HCT116 (cell line): ENCODE measurements at regions of chr10 and their contacts with region 1.

Region 1: GRCh38 chr10:112383325-112383724 is 9.4 kb downstream of the ACSL5 start:
- DNase-seq: peak; percentile 93
- ATAC-seq: peak; percentile 35
- H3K4me3 ChIP-seq: peak overlapping the region; percentile 2 to 35; a peak in 2 of 4 replicates
- H3K27ac ChIP-seq: peak overlapping the region; percentile 77
- H3K4me1 ChIP-seq: peaks cover 90 to 98% of the 10 kb centered on the region in 2 experiments
- H3K27me3 ChIP-seq: no peaks in the 10 kb centered on the region
- CTCF ChIP-seq: no peak
- POLR2A ChIP-seq: no peak
- RAD21 ChIP-seq: no peak

Region 2: DNA sequence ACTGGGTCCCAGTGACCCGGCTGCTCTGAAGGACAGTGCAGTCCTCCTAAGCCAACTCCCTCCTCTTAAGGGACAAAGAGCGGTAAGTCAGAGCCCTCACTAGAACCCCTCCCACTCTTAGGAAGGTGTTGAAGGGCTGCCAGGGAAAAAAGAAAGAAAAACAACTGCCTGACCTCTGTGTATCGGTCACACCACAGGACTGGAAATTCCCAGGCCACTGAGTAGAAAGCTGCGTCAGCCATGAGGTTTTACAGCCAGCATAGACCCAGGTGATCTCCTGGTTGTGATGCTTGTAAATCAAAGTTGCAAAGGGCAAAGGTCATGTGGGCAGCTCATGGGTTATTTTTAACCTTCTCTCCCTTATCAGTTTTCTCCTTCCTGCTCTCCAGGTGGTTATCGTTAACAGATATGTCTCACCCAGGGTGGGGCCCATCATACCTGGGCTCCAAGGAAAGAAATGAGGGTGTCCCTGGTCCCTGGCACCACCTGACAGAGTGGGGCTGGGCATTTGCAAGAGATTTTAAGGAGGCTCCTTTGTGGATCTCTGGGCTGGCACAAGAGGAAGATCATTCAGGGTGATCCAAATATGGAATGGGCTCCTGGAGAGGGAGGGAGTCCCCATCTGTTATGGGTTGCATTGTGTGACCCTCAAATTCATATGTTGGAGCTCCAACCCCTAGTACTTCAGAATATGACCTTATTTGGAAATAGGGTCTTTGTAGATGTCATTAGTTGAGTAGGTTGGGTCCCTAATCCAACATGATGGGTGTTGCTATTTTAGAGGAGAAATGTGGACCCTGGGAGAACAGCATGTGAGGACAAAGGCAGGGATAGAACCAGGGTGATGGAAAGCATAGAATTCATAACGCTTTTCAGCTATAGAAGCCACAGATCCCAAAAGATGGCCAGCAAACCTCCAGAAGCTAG is 1987.3 kb before region 1 on chr10:
- CTCF ChIA-PET with region 1: no interaction called
- POLR2A ChIA-PET with region 1: interaction called, 4 read pairs
- RAD21 ChIA-PET with region 1: no interaction called
- intact Hi-C with region 1: loop called (anchors 5 kb)
- DNase-seq: peak; percentile 96
- ATAC-seq: peak; percentile 58
- H3K4me3 ChIP-seq: peak overlapping the region in 1 of 2 experiments; percentile 19; a peak in 2 of 4 replicates
- H3K27ac ChIP-seq: peak overlapping the region; percentile 71
- H3K4me1 ChIP-seq: peaks cover 69 to 85% of the 10 kb centered on the region in 2 experiments
- H3K27me3 ChIP-seq: no peaks in the 10 kb centered on the region
- CTCF ChIP-seq: no peak
- POLR2A ChIP-seq: no peak
- RAD21 ChIP-seq: no peak

Region 3: DNA sequence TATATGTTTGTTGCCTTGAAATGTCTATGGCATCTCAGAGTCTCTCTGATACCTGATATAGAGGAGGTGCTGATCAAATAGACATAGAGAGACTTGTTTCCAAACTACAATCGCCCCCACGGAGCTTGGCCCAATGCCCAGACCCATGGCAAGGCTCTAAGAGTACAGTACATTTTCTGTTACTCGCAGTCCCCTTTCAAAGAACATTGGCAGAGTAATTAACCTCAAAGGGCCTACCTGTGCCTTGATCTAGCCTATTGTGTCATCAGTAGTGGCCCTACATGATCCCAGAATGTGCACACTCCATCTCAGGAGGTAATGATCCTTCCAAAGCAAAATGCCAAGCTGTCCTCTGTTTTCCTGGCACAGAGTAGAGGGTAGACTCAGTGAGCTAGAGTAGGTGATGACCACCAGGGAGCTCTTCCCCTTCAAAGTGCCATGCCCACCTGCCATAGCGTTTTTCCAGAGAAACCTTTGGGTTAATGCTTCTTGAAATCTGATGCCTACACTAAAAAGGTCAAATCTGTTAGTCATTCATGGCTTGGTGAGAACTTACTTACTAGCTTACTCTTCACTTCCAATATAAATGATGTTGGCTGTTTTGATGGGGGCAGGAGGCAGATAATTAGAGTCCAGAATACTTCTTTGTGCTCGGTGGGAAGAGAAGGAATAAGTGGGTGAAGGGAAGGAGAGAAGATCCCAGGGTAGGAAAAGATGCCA is 50.7 kb before region 1 on chr10:
- CTCF ChIA-PET with region 1: no interaction called
- POLR2A ChIA-PET with region 1: interaction called, 14 read pairs
- RAD21 ChIA-PET with region 1: interaction called, 3 to 4 read pairs
- intact Hi-C with region 1: no loop called
- DNase-seq: peak; percentile 94
- ATAC-seq: peak; percentile 75
- H3K4me3 ChIP-seq: peak overlapping the region in 1 of 2 experiments; percentile 29; a peak in 2 of 4 replicates
- H3K27ac ChIP-seq: peak overlapping the region; percentile 60
- H3K4me1 ChIP-seq: peaks cover 77 to 100% of the 10 kb centered on the region in 2 experiments
- H3K27me3 ChIP-seq: no peaks in the 10 kb centered on the region
- CTCF ChIP-seq: no peak
- POLR2A ChIP-seq: no peak
- RAD21 ChIP-seq: no peak

Region 4: DNA sequence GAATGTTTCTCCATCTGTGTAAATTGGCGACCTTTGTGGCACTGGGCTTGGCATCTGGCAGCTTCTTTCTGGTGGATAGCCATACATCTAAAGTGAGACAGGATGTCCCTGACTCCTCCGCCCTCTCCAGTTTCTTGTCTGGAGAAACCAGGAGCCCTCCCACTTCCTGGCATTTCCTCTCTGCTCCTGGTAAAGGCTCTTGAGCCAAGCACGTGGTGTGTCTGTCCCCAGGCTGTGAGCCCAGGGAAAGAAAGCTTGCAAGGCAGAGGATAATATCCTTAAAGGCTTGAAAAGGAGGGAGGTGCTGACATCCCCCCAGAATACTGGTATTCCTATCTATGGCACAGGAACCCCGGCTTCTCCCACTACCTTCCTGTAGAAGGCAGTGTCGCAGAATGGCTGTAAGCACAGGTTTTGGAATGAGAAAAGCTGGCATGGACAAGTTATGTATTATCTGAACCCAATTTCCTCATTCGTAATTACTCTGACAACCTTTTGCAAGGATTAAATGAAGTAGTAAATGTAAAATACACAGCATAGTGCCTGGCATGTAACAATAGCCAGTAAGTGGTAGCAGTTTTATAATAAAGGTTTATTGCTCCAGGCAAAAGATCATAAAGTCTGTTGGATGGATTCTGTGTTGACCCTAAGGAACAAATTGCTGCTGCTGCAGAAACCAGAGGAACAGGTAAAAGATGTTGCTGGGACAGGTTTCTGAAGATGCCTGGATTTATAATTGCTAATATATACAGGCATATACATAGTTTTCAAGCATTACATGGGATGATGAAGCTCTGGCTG is 21.2 kb before region 1 on chr10:
- CTCF ChIA-PET with region 1: no interaction called
- POLR2A ChIA-PET with region 1: interaction called, 10 read pairs
- RAD21 ChIA-PET with region 1: no interaction called
- intact Hi-C with region 1: no loop called
- DNase-seq: no peak
- ATAC-seq: peak; percentile 60
- H3K4me3 ChIP-seq: no peak overlapping the region
- H3K27ac ChIP-seq: peak overlapping the region; percentile 83
- H3K4me1 ChIP-seq: peaks cover 41 to 73% of the 10 kb centered on the region in 2 experiments
- H3K27me3 ChIP-seq: no peaks in the 10 kb centered on the region
- CTCF ChIP-seq: peak in 2 of 3 experiments; percentile 55 to 61; a peak in 4 of 6 replicates
- POLR2A ChIP-seq: no peak
- RAD21 ChIP-seq: no peak

Region 5: GRCh38 chr10:112404616-112405015 is 21.3 kb after region 1 on chr10:
- CTCF ChIA-PET with region 1: no interaction called
- POLR2A ChIA-PET with region 1: interaction called, 10 read pairs
- RAD21 ChIA-PET with region 1: no interaction called
- intact Hi-C with region 1: no loop called
- DNase-seq: peak; percentile 74
- ATAC-seq: peak; percentile 82
- H3K4me3 ChIP-seq: peak overlapping the region in 1 of 2 experiments; percentile 13; a peak in 2 of 4 replicates
- H3K27ac ChIP-seq: peak overlapping the region; percentile 90
- H3K4me1 ChIP-seq: peaks cover 44 to 88% of the 10 kb centered on the region in 2 experiments
- H3K27me3 ChIP-seq: no peaks in the 10 kb centered on the region
- CTCF ChIP-seq: no peak
- POLR2A ChIP-seq: no peak
- RAD21 ChIP-seq: no peak

Region 6: DNA sequence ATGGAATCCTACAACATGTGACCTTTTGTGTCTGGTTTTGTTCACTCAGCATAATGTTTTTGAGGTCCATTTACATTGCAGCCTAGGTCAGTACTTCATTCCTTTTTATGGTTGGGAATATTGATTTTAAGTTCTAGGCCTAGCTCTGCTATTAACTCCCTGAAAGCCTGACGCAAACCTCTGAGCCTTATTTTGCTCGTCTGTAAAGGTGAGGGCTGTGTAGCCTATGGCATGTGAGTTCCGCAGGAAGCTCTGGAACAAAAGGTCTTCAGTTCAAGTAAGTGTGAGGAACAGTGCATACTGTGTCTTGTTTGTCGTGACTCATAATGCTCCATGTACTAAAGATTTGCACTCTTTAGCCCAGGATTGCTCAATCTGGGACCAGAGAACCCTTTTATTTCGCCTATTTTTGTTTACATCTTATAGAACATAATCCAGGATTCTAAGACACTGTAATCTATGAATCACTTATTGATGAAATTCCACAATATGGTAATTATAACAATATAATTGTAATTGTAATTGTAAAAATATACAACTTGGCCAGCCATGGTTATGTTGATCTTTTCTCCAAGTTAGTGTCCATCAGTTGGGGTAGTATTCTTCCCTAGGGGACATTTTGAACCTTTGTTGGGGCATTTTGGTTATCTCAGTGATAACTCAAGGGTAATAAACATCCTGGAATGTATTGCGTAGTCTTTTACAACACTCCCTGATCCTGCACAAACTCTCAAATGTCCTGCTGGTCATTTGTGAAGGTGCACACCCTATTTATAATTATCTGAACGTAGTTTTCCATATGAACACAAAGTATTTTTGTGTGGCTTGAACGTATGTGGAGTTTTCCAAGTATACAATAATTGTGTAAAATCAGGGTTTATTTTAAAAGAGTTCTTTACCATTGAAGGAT is 248.4 kb after region 1 on chr10:
- CTCF ChIA-PET with region 1: no interaction called
- POLR2A ChIA-PET with region 1: no interaction called
- RAD21 ChIA-PET with region 1: no interaction called
- intact Hi-C with region 1: no loop called
- DNase-seq: peak; percentile 86
- ATAC-seq: peak; percentile 92
- H3K4me3 ChIP-seq: no peak overlapping the region
- H3K27ac ChIP-seq: peak overlapping the region; percentile 31; the same call in 1 of the 2 replicates
- H3K4me1 ChIP-seq: peaks cover 9 to 37% of the 10 kb centered on the region in 2 experiments; a peak in 3 of 4 replicates
- H3K27me3 ChIP-seq: no peaks in the 10 kb centered on the region
- CTCF ChIP-seq: no peak
- POLR2A ChIP-seq: no peak
- RAD21 ChIP-seq: no peak